ENCODE measurements at regions of chr2 and their contacts with region 1.

Region 1: GRCh38 chr2:170815746-170816503 is 762 bp upstream of the GAD1 start:
- DNase-seq: peak; percentile 69
- ATAC-seq: peak; percentile 79

Region 2: DNA sequence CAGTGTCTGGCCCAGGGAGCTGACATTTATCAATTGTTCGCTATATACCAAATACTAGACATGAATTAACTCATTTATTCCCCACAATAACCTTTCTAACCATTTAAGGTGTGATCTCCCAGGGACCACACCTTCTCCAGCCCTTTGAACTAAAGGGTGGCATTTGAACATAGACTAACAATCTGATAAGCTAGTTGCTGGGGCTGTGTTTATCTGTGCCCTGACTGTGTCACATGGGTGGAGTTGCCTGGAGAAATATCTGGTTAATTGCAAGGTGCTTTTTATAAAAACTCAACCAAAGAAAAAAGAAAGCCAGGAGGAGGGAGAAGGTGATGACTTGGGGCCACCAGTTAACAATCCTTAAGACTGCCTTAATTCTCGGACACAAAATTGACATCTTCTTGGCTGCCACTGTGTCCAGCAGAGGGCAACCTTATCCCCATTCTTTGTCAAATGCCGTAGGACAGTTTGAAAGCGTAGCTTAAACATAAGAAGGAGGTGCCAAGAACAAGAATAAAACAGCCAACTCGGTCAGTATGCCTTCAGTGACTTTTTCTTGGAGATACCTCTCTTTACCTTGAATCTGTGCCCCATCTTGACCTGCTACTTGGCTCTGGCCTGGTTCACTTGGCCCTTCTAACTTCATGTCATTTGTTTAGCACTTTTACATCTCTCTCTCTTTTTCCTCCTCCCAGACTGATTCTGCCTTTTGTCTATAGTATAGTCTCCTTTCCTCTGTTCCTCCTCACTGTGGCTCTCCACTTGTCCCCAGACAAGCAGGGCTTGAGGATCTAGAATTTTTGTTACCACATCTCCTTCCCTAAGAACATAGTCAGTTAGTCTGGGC is 454.6 kb before region 1 on chr2:
- intact Hi-C with region 1: loop called (anchors 10 kb)
- DNase-seq: no peak
- ATAC-seq: peak; percentile 51

Region 3: GRCh38 chr2:170411660-170412059 is 404.3 kb before region 1 on chr2:
- intact Hi-C with region 1: loop called (anchors 10 kb)
- DNase-seq: no peak
- ATAC-seq: no peak

Region 4: GRCh38 chr2:170486730-170487129 is 329.2 kb before region 1 on chr2:
- intact Hi-C with region 1: loop called (anchors 10 kb)
- DNase-seq: no peak
- ATAC-seq: no peak

Region 5: GRCh38 chr2:171253900-171254655 is 438.2 kb after region 1 on chr2:
- intact Hi-C with region 1: no loop called
- DNase-seq: no peak
- ATAC-seq: no peak